ENCODE measurements at regions of chr6 and their contacts with region 1.

Region 1: DNA sequence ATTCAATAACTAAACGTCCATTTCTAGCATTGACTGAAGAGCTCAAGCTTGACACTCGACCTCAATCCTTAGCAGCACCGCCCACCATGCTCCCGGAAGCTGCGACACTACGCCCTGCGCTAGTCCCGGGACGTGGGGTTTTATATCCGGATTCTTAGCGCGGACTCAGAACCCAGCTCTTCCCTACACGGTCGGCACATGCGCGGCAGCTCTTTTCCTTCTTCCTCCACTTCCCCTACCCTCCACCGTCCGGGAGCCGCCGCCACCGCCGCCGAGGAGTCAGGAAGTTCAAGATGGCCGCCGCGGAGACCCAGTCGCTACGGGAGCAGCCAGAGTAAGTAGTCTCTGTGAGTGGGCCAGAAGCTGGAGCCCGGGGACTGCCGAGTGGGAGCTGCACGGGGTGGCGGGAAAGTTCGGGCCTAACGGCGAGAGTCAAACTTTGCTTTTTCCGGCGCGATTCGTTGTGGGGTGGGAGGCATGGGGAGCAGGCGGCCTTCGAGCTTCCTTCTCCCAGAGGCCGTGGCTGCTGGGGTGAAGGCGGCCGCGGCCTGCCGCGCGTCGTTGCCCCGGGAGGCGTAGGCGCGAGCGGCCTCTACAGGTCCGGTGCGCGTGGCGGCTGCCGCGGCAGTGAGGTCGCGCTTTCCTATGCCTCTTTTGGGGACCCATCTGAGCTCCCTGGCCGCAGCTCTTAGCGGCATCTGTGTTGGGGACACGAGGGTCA is 57.6 kb downstream of the FAM217A start:
- DNase-seq: peak; percentile 90
- ATAC-seq: peak; percentile 83
- H3K4me3 Mint-ChIP-seq: peak overlapping the region; percentile 87
- H3K27ac Mint-ChIP-seq: peak overlapping the region; percentile 98
- H3K4me1 Mint-ChIP-seq: peaks cover 54% of the 10 kb centered on the region
- H3K27me3 Mint-ChIP-seq: no peaks in the 10 kb centered on the region
- CTCF ChIP-seq: no peak

Region 2: GRCh38 chr6:4078691-4079471 is 57.6 kb after region 1 on chr6 and contains the start of gene FAM217A:
- CTCF ChIA-PET with region 1: no interaction called
- POLR2A ChIA-PET with region 1: no interaction called
- DNase-seq: peak; percentile 38
- ATAC-seq: peak; percentile 84
- H3K4me3 Mint-ChIP-seq: no peak within 1 kb of the TSS
- H3K27ac Mint-ChIP-seq: peak within 1 kb of the TSS; percentile 53; the same call in 1 of the 2 replicates
- H3K4me1 Mint-ChIP-seq: peaks cover 3% of the 10 kb centered on the region; the same call in 1 of the 2 replicates
- H3K27me3 Mint-ChIP-seq: no peaks in the 10 kb centered on the region
- CTCF ChIP-seq: no peak
- total RNA-seq, gene FAM217A: not detected in 3 replicates

Region 3: DNA sequence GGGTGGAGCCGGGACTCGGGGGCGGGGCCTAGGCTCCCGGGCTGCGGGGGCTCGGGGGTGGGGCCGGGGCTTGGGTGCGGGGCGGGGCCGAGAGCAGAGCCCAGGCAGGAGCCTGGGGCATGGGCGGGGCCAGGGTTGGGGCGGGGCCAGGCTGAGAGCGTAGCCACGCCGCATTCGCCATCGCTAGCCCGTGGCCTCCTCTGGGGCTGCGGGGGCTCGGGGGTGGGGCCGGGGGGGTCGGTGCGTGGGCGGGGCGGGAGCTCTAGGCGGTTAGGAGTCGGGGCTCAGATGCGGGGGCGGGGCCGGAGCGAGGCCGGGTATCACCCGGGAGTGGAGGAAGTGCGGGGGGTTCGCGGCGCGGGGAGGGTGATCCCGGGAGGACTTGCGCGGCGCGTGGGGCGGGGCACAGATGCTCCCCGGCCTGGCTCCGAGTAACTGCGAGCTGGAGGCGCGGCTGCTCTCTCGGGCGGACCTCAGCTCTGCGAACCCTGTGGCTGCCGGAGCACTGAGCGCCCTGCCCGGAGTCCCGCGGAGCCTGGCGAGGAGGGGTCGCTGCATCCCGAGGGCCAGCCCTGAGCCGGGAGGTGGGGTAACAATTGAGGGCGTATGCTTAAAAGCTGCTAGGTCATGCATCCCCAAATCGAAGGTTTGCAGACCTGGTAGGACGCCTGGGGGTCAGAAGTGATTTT is 114.5 kb after region 1 on chr6:
- CTCF ChIA-PET with region 1: interaction called, 3 read pairs
- POLR2A ChIA-PET with region 1: interaction called, 18 read pairs
- DNase-seq: peak; percentile 95
- ATAC-seq: peak; percentile 89
- H3K4me3 Mint-ChIP-seq: peak overlapping the region; percentile 69
- H3K27ac Mint-ChIP-seq: peak overlapping the region; percentile 84
- H3K4me1 Mint-ChIP-seq: peaks cover 28% of the 10 kb centered on the region
- H3K27me3 Mint-ChIP-seq: no peaks in the 10 kb centered on the region
- CTCF ChIP-seq: no peak

Measured in WTC11 (cell line).